ENCODE measurements at regions of chr7 and their contacts with region 1.

Region 1: GRCh38 chr7:23055582-23056178 is 41.8 kb upstream of the HYCC1 start:
- DNase-seq: peak; percentile 79
- H3K4me3 Mint-ChIP-seq: no peak overlapping the region
- H3K27ac Mint-ChIP-seq: no peak overlapping the region
- H3K4me1 Mint-ChIP-seq: peaks cover 6% of the 10 kb centered on the region
- H3K27me3 Mint-ChIP-seq: no peaks in the 10 kb centered on the region
- CTCF ChIP-seq: peak; percentile 92

Region 2: GRCh38 chr7:22726345-22727185 is 329.1 kb before region 1 on chr7:
- CTCF ChIA-PET with region 1: interaction called, 28 read pairs
- POLR2A ChIA-PET with region 1: interaction called, 3 read pairs
- intact Hi-C with region 1: loop called (anchors 1 kb)
- DNase-seq: peak; percentile 86
- H3K4me3 Mint-ChIP-seq: peak overlapping the region; percentile 72
- H3K27ac Mint-ChIP-seq: peak overlapping the region; percentile 71
- H3K4me1 Mint-ChIP-seq: peaks cover 45% of the 10 kb centered on the region
- H3K27me3 Mint-ChIP-seq: no peaks in the 10 kb centered on the region
- CTCF ChIP-seq: peak; percentile 63

Region 3: DNA sequence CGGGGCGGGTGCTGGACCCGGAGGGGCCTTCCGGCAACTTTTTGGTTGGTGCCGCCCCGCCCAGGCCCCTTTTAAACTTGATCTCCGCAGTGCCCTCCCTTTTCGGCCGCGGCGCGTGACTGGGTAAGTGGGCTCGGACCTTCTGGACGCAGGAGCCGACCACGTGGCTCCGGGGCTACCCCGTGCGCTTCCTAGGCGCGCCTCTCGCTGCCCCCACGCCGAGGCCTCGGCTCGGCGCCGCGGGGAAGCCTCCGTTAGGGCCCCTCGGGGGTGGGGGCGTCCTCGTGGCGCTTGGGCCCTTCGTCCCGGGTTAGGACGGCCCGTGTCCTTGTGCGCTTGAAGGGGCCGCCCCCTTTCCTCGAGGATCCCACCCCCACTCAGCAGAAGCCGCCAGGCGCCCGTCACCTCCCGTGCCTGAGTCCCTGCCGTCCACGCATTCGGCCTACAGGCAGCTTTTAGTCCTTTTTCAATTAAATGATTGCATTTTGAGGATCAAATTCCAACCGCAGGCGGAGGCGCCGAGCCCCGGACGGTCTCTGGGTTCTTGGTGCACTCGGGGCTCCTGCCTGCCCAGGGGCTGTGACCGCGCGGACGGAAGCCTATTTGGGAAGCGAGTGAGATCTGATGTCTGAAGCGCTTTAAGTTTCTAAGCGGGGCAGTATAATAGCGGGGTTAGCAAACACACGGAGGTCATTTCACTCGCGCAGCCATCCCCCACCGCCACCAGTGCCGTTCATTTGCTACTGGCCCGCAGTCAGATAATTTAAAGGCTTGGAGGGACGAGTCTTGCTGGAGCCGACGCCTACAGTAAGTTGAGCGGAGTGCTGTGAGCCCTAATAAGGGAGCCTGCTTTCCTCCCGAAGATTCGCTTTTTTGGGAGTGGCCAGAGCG is 201.3 kb before region 1 on chr7:
- CTCF ChIA-PET with region 1: interaction called, 13 read pairs
- POLR2A ChIA-PET with region 1: interaction called, 13 read pairs
- intact Hi-C with region 1: loop called (anchors 1 kb)
- DNase-seq: peak; percentile 91
- H3K4me3 Mint-ChIP-seq: peak overlapping the region; percentile 90
- H3K27ac Mint-ChIP-seq: peak overlapping the region; percentile 52
- H3K4me1 Mint-ChIP-seq: peaks cover 19% of the 10 kb centered on the region
- H3K27me3 Mint-ChIP-seq: no peaks in the 10 kb centered on the region
- CTCF ChIP-seq: peak; percentile 86

Region 4: DNA sequence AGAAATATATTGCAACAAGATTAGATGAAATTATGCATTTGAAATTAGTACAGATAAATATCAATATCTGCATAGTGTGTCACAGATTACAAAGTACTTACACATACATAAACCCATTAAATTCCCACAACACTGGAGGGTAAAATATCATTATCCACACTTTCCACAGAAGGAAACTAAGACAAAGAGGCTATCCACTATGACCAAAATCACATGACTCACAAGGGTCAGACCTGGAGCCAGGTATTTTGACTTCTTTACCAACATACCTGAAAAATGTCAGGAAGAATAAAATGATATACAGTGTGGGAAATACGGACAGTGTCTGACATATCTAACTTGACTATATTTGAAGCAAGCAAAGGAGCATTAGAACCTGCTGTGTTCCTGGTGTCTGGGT is 75.8 kb before region 1 on chr7:
- CTCF ChIA-PET with region 1: interaction called, 4 read pairs
- POLR2A ChIA-PET with region 1: no interaction called
- intact Hi-C with region 1: loop called (anchors 10 kb)
- DNase-seq: no peak
- H3K4me3 Mint-ChIP-seq: no peak overlapping the region
- H3K27ac Mint-ChIP-seq: peak overlapping the region; percentile 87
- H3K4me1 Mint-ChIP-seq: peaks cover 32% of the 10 kb centered on the region
- H3K27me3 Mint-ChIP-seq: no peaks in the 10 kb centered on the region
- CTCF ChIP-seq: no peak

Region 5: GRCh38 chr7:23026164-23026563 is 29.5 kb before region 1 on chr7:
- CTCF ChIA-PET with region 1: interaction called, 31 read pairs
- POLR2A ChIA-PET with region 1: interaction called, 8 read pairs
- intact Hi-C with region 1: no loop called
- DNase-seq: peak; percentile 75
- H3K4me3 Mint-ChIP-seq: no peak overlapping the region
- H3K27ac Mint-ChIP-seq: peak overlapping the region; percentile 28
- H3K4me1 Mint-ChIP-seq: peaks cover 27% of the 10 kb centered on the region
- H3K27me3 Mint-ChIP-seq: no peaks in the 10 kb centered on the region
- CTCF ChIP-seq: no peak

Region 6: GRCh38 chr7:23105644-23106056 is 50.0 kb after region 1 on chr7 and contains the start of gene KLHL7:
- CTCF ChIA-PET with region 1: interaction called, 11 read pairs
- POLR2A ChIA-PET with region 1: interaction called, 5 read pairs
- intact Hi-C with region 1: no loop called
- DNase-seq: peak; percentile 95
- H3K4me3 Mint-ChIP-seq: peak within 1 kb of the TSS; percentile 94
- H3K27ac Mint-ChIP-seq: peak within 1 kb of the TSS; percentile 96
- H3K4me1 Mint-ChIP-seq: peaks cover 34% of the 10 kb centered on the region
- H3K27me3 Mint-ChIP-seq: no peaks in the 10 kb centered on the region
- CTCF ChIP-seq: no peak
- total RNA-seq, gene KLHL7: 17.9 and 19.1 TPM in 2 replicates

Region 7: GRCh38 chr7:24039991-24040624 is 984.4 kb after region 1 on chr7:
- CTCF ChIA-PET with region 1: no interaction called
- POLR2A ChIA-PET with region 1: no interaction called
- intact Hi-C with region 1: no loop called
- DNase-seq: no peak
- H3K4me3 Mint-ChIP-seq: no peak overlapping the region
- H3K27ac Mint-ChIP-seq: no peak overlapping the region
- H3K4me1 Mint-ChIP-seq: peaks cover 9% of the 10 kb centered on the region
- H3K27me3 Mint-ChIP-seq: no peaks in the 10 kb centered on the region
- CTCF ChIP-seq: no peak

Measured in MCF 10A (cell line).